HEK293 (cell line): ENCODE measurements at regions of chr2 and their contacts with region 1.

Region 1: DNA sequence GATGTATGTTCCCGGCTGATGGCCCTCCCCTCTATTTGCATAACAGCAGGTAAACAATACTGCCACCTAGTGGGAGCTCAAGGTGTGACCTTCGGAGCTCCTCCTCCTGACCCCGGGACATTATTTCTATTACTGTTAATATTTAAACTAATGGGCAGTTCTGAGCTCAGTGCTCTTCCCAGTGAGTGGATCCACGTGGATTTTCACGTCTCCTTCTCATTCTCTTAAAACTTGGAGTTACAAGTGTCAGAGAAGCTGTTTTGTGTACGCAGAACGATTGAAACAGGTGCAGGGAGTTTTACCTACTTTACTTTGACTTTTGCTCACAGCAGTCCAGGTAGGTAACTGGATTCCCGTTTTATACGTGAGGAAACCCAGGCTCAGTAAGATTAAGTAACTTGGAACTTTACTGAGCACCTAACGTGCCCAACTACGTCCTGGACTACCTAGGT is 127.3 kb downstream of the PRKCE start:
- H3K4me3 ChIP-seq: no peak overlapping the region
- H3K27ac ChIP-seq: no peak overlapping the region
- H3K4me1 ChIP-seq: no peaks in the 10 kb centered on the region; the same call in 1 of the 2 replicates
- CTCF ChIP-seq: no peak

Region 2: DNA sequence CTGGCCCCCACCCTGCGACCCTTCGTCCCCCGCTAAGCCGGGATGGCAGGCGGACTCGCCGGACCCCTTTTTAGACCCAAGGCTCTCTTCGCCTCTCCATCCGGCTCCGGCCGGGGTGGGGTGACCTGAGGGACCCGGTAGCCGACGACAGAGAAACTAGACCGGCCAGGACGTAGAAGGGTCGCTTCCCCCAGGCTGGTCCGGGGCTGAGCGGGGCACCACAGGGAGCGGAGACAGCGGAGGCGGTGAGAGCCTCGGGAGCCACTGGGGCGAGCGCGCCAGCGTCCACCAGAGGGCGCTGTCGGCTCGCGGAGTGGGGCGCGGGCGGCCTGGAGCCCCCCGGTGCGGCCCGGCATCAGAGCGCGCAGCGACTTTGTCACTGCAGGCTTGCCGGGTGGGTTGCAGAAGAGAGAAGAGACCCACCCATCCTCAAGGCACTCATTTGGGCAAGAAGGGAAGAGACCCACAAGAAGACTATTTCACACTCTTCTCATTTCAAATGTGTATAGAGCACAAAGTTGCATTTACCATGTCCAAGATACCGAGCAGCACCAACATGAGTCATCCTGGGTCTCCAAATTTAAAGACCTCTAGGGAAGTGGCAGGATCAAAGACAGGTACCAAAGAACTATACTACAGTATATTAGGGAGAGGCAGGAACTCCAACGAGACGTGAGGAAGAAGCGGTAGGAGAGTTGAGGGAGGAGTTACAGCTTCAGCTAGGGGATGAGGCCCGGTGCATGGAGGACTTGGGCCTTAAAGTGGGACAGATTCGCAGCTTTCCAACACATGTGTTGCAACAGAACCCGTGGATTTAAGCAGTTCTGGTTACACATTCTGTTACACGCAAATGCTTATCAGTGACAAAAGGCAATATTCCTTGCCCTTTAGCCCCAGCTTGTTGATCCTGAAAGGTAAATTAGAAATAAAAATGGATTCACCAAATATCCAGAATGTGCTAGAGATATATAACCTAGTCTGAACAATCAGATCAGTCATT is 134.9 kb before region 1 on chr2:
- CTCF ChIA-PET with region 1: interaction called, 17 read pairs
- POLR2A ChIA-PET with region 1: no interaction called
- H3K4me3 ChIP-seq: peak overlapping the region; percentile 47
- H3K27ac ChIP-seq: peak overlapping the region; percentile 49; the same call in 1 of the 2 replicates
- H3K4me1 ChIP-seq: peaks cover 3% of the 10 kb centered on the region; the same call in 1 of the 2 replicates
- CTCF ChIP-seq: peak; percentile 84

Region 3: DNA sequence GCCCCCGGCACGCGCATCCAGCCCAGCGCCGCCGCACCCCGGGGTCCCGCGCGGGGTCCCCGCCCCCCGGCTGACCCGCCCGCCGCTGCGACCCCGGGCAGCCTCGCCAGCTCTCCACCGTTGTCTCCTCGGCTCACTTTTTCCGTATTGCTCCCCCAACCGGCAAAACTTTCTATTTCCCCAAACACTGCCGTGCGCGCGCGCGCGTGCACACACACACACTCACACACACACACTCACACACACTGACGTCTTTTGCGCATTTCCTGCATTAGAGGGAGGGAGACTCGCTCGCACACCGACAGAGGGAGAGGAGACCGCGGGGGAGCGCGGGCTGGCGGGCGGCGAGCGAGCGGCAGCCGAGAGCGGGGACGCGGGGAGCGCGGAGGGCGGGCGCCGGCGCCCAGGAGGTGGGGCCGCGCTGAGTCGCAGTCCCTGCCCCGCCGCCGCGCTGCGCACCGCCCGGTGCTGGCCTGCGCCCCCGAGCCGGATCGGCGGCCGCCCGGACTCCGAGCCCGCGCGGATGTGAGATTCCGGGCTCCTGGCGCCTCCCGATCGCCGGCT is 127.8 kb before region 1 on chr2:
- CTCF ChIA-PET with region 1: interaction called, 13 read pairs
- POLR2A ChIA-PET with region 1: interaction called, 3 read pairs
- H3K4me3 ChIP-seq: peak overlapping the region; percentile 75
- H3K27ac ChIP-seq: peak overlapping the region; percentile 96
- H3K4me1 ChIP-seq: peaks cover 23% of the 10 kb centered on the region
- CTCF ChIP-seq: peak; percentile 99

Region 4: DNA sequence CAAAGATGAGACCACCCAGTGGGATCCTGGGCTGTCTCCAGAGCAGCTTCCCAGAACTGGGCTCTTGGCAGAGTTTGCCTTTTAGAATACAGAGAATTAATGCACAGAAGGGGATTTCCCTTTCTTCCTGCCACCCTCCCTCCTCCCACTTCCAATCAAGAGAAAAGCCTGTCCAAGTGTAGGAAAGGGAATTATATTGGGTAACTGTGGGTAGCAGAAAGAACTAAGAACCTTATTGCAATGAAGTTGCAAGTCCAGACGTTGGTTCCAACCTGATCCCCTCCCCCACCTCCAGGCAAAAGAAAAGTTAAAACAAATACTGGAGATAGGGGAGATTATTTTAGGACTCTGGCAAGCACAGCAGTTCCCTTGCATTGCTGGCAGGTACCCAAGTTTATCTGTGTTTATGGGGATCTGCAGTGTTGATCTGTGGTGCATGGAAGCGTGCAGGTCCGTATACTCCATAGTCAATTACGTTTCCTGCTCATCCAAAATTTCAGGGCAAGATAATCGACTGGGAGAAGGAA is 13.0 kb before region 1 on chr2:
- CTCF ChIA-PET with region 1: interaction called, 10 read pairs
- POLR2A ChIA-PET with region 1: no interaction called
- H3K4me3 ChIP-seq: no peak overlapping the region
- H3K27ac ChIP-seq: peak overlapping the region; percentile 48
- H3K4me1 ChIP-seq: peaks cover 36% of the 10 kb centered on the region
- CTCF ChIP-seq: no peak

Region 5: GRCh38 chr2:45789961-45790723 is 11.4 kb after region 1 on chr2:
- CTCF ChIA-PET with region 1: interaction called, 39 read pairs
- POLR2A ChIA-PET with region 1: no interaction called
- H3K4me3 ChIP-seq: no peak overlapping the region
- H3K27ac ChIP-seq: no peak overlapping the region
- H3K4me1 ChIP-seq: no peaks in the 10 kb centered on the region; the same call in 1 of the 2 replicates
- CTCF ChIP-seq: no peak

Region 6: GRCh38 chr2:45797451-45798230 is 18.9 kb after region 1 on chr2:
- CTCF ChIA-PET with region 1: interaction called, 39 read pairs
- POLR2A ChIA-PET with region 1: no interaction called
- H3K4me3 ChIP-seq: no peak overlapping the region
- H3K27ac ChIP-seq: no peak overlapping the region
- H3K4me1 ChIP-seq: no peaks in the 10 kb centered on the region; the same call in 1 of the 2 replicates
- CTCF ChIP-seq: no peak